PC-9 (cell line): ENCODE measurements at regions of chr14 and their contacts with region 1.

Region 1: GRCh38 chr14:22047115-22047514 is 373.5 kb upstream of the OR4E1 start:
- DNase-seq: no peak
- H3K4me3 ChIP-seq: no peak overlapping the region
- H3K27ac ChIP-seq: no peak overlapping the region
- H3K4me1 ChIP-seq: no peaks in the 10 kb centered on the region
- H3K27me3 ChIP-seq: no peaks in the 10 kb centered on the region
- CTCF ChIP-seq: 0 out of 2 replicates have a peak, but pooled peaks have one; percentile 30

Region 2: DNA sequence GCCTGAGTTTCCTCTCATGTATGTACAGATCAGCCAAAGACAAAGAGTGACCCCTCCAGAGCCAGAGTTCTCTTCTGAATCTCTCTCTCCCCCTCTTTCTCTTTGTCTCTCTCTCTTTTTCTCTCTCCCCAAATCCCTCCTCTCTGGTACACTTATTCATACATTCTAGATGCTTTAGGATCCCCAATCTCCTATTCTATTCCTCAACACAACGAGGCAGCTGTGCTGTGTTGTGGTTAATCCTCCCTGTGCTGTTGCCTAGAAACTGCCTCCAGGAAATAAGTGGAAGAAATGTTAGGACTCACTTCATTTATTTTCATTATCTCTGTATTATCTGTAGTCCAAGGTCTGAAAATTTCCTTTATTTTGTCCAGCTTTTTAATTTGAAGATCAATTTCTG is 23.0 kb before region 1 on chr14:
- CTCF ChIA-PET with region 1: no interaction called
- POLR2A ChIA-PET with region 1: no interaction called
- intact Hi-C with region 1: loop called (anchors 1 kb)
- DNase-seq: no peak
- H3K4me3 ChIP-seq: no peak overlapping the region
- H3K27ac ChIP-seq: no peak overlapping the region
- H3K4me1 ChIP-seq: no peaks in the 10 kb centered on the region
- H3K27me3 ChIP-seq: no peaks in the 10 kb centered on the region
- CTCF ChIP-seq: no peak